WTC11 (cell line): ENCODE measurements at regions of chr11 and their contacts with region 1.

Region 1: GRCh38 chr11:125429166-125429707 is 66.8 kb downstream of the FEZ1 start:
- DNase-seq: peak; percentile 90
- ATAC-seq: peak; percentile 66
- H3K4me3 Mint-ChIP-seq: no peak overlapping the region
- H3K27ac Mint-ChIP-seq: no peak overlapping the region
- H3K4me1 Mint-ChIP-seq: peaks cover 36% of the 10 kb centered on the region
- H3K27me3 Mint-ChIP-seq: no peaks in the 10 kb centered on the region
- CTCF ChIP-seq: peak; percentile 48

Region 2: GRCh38 chr11:125111343-125112207 is 317.7 kb before region 1 on chr11 and contains the start of gene TMEM218:
- CTCF ChIA-PET with region 1: interaction called, 10 read pairs
- POLR2A ChIA-PET with region 1: no interaction called
- DNase-seq: peak; percentile 98
- ATAC-seq: peak; percentile 99
- H3K4me3 Mint-ChIP-seq: peak within 1 kb of the TSS; percentile 98
- H3K27ac Mint-ChIP-seq: peak within 1 kb of the TSS; percentile 98
- H3K4me1 Mint-ChIP-seq: peaks cover 14% of the 10 kb centered on the region
- H3K27me3 Mint-ChIP-seq: no peaks in the 10 kb centered on the region; the same call in 1 of the 2 replicates
- CTCF ChIP-seq: no peak
- total RNA-seq, gene TMEM218: 10.3 to 12.4 TPM (median 11.0 TPM) in 3 replicates

Region 3: GRCh38 chr11:125164422-125165110 is 264.7 kb before region 1 on chr11 and contains the start of gene PKNOX2:
- CTCF ChIA-PET with region 1: interaction called, 12 read pairs
- POLR2A ChIA-PET with region 1: no interaction called
- DNase-seq: peak; percentile 91
- ATAC-seq: peak; percentile 36
- H3K4me3 Mint-ChIP-seq: peak within 1 kb of the TSS; percentile 84
- H3K27ac Mint-ChIP-seq: peak within 1 kb of the TSS; percentile 95
- H3K4me1 Mint-ChIP-seq: peaks cover 69% of the 10 kb centered on the region
- H3K27me3 Mint-ChIP-seq: peaks cover 58% of the 10 kb centered on the region
- CTCF ChIP-seq: no peak
- total RNA-seq, gene PKNOX2: 1.9 to 3.7 TPM (median 2.3 TPM) in 3 replicates

Region 4: DNA sequence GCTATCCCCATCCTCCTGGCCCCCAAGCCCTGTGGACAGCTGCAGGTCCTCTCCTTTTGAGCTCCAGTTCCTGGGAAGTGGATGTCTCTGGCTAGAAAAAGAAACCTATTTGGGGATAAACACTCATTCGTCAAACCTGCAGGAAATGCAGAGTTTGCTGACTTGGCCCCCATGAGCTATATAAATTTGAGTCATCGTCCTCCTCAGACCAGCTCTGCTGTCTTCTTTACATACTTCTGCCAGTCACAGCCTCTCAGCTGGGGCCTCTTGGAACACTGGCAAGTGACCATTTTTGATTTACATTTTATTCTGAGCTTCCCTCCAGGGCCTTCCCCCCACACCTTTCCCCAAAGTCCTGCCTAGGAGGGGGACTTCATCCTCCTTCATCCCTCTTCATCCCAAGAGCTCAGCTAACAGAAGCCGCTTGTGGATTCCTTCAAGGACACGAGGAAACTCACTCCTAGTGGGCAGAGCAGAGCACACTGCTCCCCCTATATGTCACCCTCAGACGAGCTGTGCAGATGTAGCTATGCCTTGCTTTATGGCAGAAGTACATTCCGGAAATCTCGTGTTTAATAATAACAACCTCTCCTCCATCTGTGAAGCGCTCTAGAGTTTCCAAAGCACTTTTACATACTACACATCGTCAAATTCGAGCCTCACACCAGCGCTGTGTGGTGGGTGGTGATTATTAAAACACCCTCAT is 65.0 kb before region 1 on chr11:
- CTCF ChIA-PET with region 1: interaction called, 11 read pairs
- POLR2A ChIA-PET with region 1: interaction called, 3 read pairs
- DNase-seq: no peak
- ATAC-seq: peak; percentile 61
- H3K4me3 Mint-ChIP-seq: no peak overlapping the region
- H3K27ac Mint-ChIP-seq: no peak overlapping the region
- H3K4me1 Mint-ChIP-seq: peaks cover 14% of the 10 kb centered on the region
- H3K27me3 Mint-ChIP-seq: no peaks in the 10 kb centered on the region; the same call in 1 of the 2 replicates
- CTCF ChIP-seq: 0 out of 2 replicates have a peak, but pooled peaks have one; percentile 13

Region 5: DNA sequence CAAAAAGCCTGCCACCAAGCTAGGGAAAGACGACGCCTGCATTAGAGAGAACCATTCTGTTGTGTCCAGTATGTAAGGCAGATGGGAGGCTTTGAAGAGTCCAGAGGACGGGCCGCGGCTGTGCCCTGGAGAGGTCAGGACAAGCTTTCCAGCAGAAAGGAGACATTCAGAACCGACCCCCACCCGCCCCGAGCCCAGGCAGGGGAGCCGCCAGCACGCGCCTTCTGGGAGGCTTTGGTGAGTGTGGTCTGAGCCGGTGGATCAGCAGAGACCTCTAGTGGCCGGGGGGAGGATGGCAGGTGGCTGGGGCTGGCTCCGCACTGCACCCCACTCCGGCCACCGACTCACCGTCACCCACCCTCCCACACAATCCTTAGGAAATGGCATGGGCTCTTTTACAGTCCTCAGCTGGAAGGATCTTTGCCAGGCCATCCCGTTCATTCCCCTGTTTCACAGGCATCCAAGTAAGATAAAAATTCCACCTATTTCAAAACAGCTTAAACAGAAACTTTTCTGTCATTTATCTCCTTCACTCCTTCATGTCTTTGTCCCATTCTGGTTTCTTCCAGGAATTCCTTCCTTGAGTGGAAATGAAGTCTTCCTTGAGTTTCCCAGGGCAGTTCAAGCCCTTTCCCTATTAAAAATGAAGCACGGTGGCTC is 24.3 kb before region 1 on chr11:
- CTCF ChIA-PET with region 1: interaction called, 45 read pairs
- POLR2A ChIA-PET with region 1: no interaction called
- DNase-seq: peak; percentile 90
- ATAC-seq: peak; percentile 84
- H3K4me3 Mint-ChIP-seq: no peak overlapping the region
- H3K27ac Mint-ChIP-seq: 0 out of 2 replicates have a peak overlapping the region, but pooled peaks have one; percentile 29
- H3K4me1 Mint-ChIP-seq: peaks cover 61% of the 10 kb centered on the region
- H3K27me3 Mint-ChIP-seq: peaks cover 23% of the 10 kb centered on the region
- CTCF ChIP-seq: peak; percentile 98

Region 6: DNA sequence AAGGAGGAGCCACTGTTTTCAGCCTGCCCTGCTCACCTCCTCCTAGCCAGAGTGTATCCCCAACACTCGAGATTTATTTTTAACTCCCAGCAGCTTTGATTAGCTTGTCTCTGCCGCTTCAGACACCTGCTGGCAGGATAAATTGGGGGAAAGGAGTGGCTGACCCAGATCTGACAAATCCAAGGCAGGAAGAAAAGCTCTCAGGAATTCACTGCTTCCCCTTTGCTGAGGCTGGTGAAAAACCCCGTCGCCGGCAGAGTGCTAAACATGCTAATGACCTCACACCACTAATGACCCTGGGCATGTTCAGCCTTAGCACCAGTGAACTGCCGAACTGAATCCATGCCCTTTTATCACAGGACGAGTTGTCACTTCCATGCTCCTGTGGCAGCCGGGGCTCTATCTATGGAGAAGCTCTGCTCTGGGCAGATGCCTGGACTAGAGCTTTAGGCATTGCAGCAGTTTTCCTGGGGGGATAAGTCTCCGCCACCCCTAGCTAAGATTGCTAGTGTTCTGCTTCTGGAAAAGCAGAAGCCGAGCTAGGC is 14.6 kb after region 1 on chr11:
- CTCF ChIA-PET with region 1: interaction called, 34 read pairs
- POLR2A ChIA-PET with region 1: interaction called, 6 read pairs
- DNase-seq: peak; percentile 43
- ATAC-seq: peak; percentile 78
- H3K4me3 Mint-ChIP-seq: peak overlapping the region; percentile 53
- H3K27ac Mint-ChIP-seq: peak overlapping the region; percentile 99
- H3K4me1 Mint-ChIP-seq: peaks cover 46% of the 10 kb centered on the region
- H3K27me3 Mint-ChIP-seq: no peaks in the 10 kb centered on the region; the same call in 1 of the 2 replicates
- CTCF ChIP-seq: no peak

Region 7: GRCh38 chr11:125532668-125533067 is 103.4 kb after region 1 on chr11:
- CTCF ChIA-PET with region 1: no interaction called
- POLR2A ChIA-PET with region 1: no interaction called
- DNase-seq: no peak
- ATAC-seq: no peak
- H3K4me3 Mint-ChIP-seq: no peak overlapping the region
- H3K27ac Mint-ChIP-seq: no peak overlapping the region
- H3K4me1 Mint-ChIP-seq: 0 out of 2 replicates have a peak, but pooled peaks cover 7% of the 10 kb centered on the region
- H3K27me3 Mint-ChIP-seq: no peaks in the 10 kb centered on the region
- CTCF ChIP-seq: no peak